Tibial artery (tissue), 4 donors: ENCODE measurements at regions of chr1 and their contacts with region 1.

Region 1: GRCh38 chr1:53485478-53486394 is 26.5 kb downstream of the DMRTB1 start:
- DNase-seq: peak; percentile 69 to 81
- H3K4me3 ChIP-seq: no peak overlapping the region
- H3K27ac ChIP-seq: no peak overlapping the region
- H3K4me1 ChIP-seq: peaks cover 0 to 5% (median 0%) of the 10 kb centered on the region in 4 donors
- H3K27me3 ChIP-seq: peaks cover 0 to 70% of the 10 kb centered on the region in 2 donors
- CTCF ChIP-seq: peak; percentile 76 to 87

Region 2: DNA sequence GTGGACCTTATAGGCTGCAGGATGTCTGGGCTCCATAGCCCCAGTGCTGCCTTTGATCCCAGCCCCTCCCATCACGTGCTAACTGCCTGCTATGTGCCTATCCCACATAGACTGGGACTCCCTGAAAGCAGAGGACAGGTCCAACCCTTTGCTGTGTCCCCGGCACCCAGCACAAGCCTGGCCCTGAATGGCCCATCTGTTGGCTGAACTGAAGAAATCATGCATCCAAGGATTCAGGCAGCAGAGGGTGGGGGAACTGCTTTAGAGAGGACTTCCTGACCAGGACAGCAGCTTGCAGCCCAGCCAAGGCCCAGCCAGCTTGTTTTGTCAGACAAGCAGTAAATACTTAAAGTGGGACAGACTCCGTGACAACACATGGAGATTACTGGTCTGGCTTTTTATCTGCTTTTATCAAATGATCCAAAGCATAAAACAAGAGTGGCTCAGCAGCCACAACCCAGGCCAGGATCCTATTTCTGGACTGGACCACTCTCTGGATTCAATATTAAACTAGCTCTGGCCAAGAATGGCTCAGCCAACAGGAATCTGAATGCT is 184.0 kb after region 1 on chr1:
- intact Hi-C with region 1: loop called (anchors 10 kb)
- DNase-seq: no peak
- H3K4me3 ChIP-seq: no peak overlapping the region
- H3K27ac ChIP-seq: no peak overlapping the region
- H3K4me1 ChIP-seq: no peaks in the 10 kb centered on the region
- H3K27me3 ChIP-seq: peaks cover 0 to 1% of the 10 kb centered on the region in 2 donors
- CTCF ChIP-seq: no peak

Region 3: GRCh38 chr1:53754484-53755312 is 269.0 kb after region 1 on chr1:
- intact Hi-C with region 1: loop called (anchors 2 kb)
- DNase-seq: peak in 1 of 2 donors; percentile 32
- H3K4me3 ChIP-seq: no peak overlapping the region
- H3K27ac ChIP-seq: no peak overlapping the region
- H3K4me1 ChIP-seq: no peaks in the 10 kb centered on the region
- H3K27me3 ChIP-seq: no peaks in the 10 kb centered on the region
- CTCF ChIP-seq: peak; percentile 56 to 64